Activated CD4-positive, alpha-beta memory T cell treated with anti-CD3 and anti-CD28 coated beads, Interleukin-2, amount 10 ng/mL, durations not matched to agents 7 days and 5 days (primary cell): ENCODE measurements at regions of chr12 and their contacts with region 1.

Region 1: GRCh38 chr12:14417715-14418114 is 52.2 kb downstream of the ATF7IP start:
- DNase-seq: peak; percentile 81
- H3K4me3 Mint-ChIP-seq: peak overlapping the region; percentile 73
- H3K27ac Mint-ChIP-seq: peak overlapping the region; percentile 90
- H3K4me1 Mint-ChIP-seq: peaks cover 58% of the 10 kb centered on the region
- H3K27me3 Mint-ChIP-seq: no peaks in the 10 kb centered on the region

Region 2: GRCh38 chr12:14157088-14157747 is 260.5 kb before region 1 on chr12:
- CTCF ChIA-PET with region 1: no interaction called
- POLR2A ChIA-PET with region 1: no interaction called
- DNase-seq: no peak
- H3K4me3 Mint-ChIP-seq: no peak overlapping the region
- H3K27ac Mint-ChIP-seq: no peak overlapping the region
- H3K4me1 Mint-ChIP-seq: no peaks in the 10 kb centered on the region
- H3K27me3 Mint-ChIP-seq: peaks cover 2% of the 10 kb centered on the region

Region 3: GRCh38 chr12:14257734-14258574 is 159.8 kb before region 1 on chr12:
- CTCF ChIA-PET with region 1: interaction called, 4 read pairs
- POLR2A ChIA-PET with region 1: interaction called, 16 read pairs
- DNase-seq: peak; percentile 95
- H3K4me3 Mint-ChIP-seq: peak overlapping the region; percentile 55
- H3K27ac Mint-ChIP-seq: peak overlapping the region; percentile 100
- H3K4me1 Mint-ChIP-seq: peaks cover 51% of the 10 kb centered on the region
- H3K27me3 Mint-ChIP-seq: no peaks in the 10 kb centered on the region

Region 4: DNA sequence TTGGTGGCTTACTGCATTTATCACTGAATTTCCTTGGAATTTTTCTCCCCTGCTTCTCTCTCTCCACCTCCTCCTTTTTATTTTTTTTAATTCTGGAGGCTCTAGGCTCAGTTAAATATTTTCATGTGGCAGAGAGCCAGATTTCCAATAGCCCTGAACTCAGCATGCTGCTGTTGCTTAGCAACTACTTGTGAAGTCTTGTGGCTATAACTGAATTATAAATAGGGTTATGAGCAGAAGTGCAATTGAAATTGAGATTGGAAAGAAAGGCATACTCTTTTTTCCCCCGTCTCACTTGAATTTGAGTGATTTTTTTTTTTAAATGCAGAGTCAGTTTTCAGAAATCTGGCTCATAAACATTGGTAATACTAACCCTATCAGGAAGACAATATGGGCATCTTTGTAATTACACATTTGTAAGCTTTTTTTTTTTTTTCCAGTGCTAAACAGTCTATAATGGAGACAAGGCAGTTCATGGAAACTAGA is 14.0 kb before region 1 on chr12:
- CTCF ChIA-PET with region 1: no interaction called
- POLR2A ChIA-PET with region 1: interaction called, 12 read pairs
- DNase-seq: no peak
- H3K4me3 Mint-ChIP-seq: no peak overlapping the region
- H3K27ac Mint-ChIP-seq: peak overlapping the region; percentile 38
- H3K4me1 Mint-ChIP-seq: peaks cover 73% of the 10 kb centered on the region
- H3K27me3 Mint-ChIP-seq: no peaks in the 10 kb centered on the region

Region 5: DNA sequence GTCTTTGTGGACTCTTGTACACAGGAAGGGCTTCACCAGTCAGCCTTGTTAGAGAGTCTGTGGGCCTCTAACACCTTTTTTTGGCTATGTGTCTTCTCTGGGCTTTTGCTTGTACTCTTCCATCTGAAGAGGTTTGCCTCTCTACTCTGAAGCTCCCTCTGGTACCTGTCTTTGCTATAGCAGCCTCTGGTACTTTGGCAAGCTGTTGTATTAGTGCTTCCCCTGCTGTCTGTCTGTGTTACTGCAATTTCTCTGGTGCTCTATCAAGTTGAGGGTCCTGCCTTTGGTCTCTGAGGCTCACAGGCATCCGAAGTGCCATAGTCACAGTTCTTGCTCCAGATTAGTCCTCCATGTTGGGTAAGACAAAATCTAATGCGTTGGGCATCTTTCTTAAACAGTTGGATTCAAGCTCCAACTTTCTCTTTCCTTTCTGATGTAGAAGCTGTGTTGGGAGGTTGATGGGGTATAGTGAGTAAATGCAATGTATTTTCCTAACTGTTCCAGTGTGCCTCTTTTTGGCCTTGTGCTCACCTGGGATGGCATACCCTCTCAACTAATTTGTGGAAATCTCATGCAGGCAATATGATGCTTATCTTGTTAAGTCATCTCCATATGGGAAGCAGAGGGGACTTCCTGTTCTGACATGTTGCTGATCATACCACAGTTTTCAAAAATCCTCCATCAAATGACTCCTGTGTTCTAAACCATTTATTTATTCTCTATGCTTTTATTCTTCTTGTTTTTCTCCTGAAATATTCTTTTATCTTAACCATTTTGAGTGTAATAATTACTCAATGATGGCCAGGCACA is 36.6 kb after region 1 on chr12:
- CTCF ChIA-PET with region 1: interaction called, 10 read pairs
- POLR2A ChIA-PET with region 1: interaction called, 3 read pairs
- DNase-seq: peak; percentile 44
- H3K4me3 Mint-ChIP-seq: peak overlapping the region; percentile 27
- H3K27ac Mint-ChIP-seq: peak overlapping the region; percentile 67
- H3K4me1 Mint-ChIP-seq: peaks cover 41% of the 10 kb centered on the region
- H3K27me3 Mint-ChIP-seq: no peaks in the 10 kb centered on the region